ENCODE measurements at regions of chr5 and their contacts with region 1.

Region 1: DNA sequence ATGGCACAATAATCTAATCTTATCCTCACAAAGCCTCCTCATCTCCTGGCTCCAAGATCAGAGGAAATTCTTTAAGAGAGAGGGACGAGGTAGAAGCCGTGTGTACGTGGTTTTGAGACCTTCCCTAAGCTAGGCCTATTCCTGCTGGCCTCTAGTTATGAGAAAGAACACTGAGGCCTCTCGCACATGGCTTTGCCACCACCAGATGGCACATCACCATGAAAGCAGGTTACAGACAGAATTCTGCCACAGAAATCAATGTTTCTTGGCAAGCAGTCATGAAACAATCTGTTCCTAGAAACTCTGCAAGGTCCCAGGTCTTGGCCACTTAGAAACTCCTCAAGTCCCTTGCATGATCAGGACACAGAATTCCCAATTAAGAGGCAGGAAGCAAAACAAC is 268.2 kb upstream of the TAS2R1 start:
- DNase-seq: peak; percentile 66
- H3K4me3 Mint-ChIP-seq: no peak overlapping the region
- H3K27ac Mint-ChIP-seq: no peak overlapping the region
- H3K4me1 Mint-ChIP-seq: no peaks in the 10 kb centered on the region
- H3K27me3 Mint-ChIP-seq: no peaks in the 10 kb centered on the region
- CTCF ChIP-seq: peak; percentile 45

Region 2: DNA sequence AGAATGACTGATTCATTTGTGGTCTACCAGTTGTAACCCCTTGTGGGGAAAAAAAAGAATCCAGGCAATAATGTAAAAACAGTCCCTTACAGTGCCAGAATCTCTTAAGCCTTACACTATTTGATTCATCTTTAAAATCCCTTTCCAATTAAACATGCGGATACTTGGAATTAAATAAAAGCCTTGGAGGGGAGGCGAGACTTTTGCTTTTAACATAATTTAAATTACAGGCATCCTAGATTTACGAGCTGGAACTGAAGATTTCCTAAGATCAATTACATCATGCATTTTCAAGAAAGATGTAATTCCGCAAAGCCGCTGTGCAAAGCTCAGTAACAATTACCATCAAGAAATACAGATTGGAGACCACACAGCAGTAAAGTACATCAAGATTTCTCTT is 1659.1 kb before region 1 on chr5:
- CTCF ChIA-PET with region 1: no interaction called
- POLR2A ChIA-PET with region 1: no interaction called
- intact Hi-C with region 1: no loop called
- DNase-seq: no peak
- H3K4me3 Mint-ChIP-seq: no peak overlapping the region
- H3K27ac Mint-ChIP-seq: no peak overlapping the region
- H3K4me1 Mint-ChIP-seq: no peaks in the 10 kb centered on the region
- H3K27me3 Mint-ChIP-seq: peaks cover 14% of the 10 kb centered on the region
- CTCF ChIP-seq: no peak

Region 3: DNA sequence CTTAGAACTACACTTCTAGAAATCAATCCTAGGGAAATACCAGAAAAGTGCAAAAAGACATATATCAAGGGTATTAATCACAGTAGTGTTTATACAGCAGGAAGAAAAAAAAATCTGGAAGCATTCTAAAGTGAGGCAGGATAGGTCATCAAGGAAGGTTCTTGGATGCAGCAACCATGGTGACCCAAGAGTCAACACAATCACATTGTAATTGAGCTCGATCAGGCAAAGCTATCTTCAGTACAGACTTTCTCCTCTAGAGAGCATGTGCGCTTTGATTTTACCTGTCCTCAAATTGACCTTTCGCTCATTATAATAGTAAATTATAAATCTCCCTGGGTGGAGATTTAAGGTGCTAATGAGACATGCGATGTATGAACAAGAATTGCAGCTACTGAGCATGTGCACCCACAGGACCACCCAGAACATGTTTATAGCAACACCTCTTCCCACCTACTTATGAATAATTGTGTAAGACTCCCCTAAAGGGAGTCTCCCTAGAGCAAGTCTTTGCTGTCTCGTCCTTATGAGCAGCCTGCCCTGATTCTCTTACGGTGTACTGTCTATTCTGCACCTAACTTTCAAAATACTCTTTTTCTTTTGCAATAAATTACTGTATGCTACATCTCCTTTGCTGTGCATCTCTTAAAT is 53.7 kb after region 1 on chr5:
- CTCF ChIA-PET with region 1: interaction called, 3 read pairs
- POLR2A ChIA-PET with region 1: no interaction called
- intact Hi-C with region 1: loop called (anchors 10 kb)
- DNase-seq: no peak
- H3K4me3 Mint-ChIP-seq: no peak overlapping the region
- H3K27ac Mint-ChIP-seq: no peak overlapping the region
- H3K4me1 Mint-ChIP-seq: peaks cover 5% of the 10 kb centered on the region
- H3K27me3 Mint-ChIP-seq: no peaks in the 10 kb centered on the region
- CTCF ChIP-seq: no peak

Region 4: GRCh38 chr5:10030210-10030831 is 132.0 kb after region 1 on chr5:
- CTCF ChIA-PET with region 1: interaction called, 6 read pairs
- POLR2A ChIA-PET with region 1: no interaction called
- intact Hi-C with region 1: loop called (anchors 1 kb)
- DNase-seq: peak; percentile 71
- H3K4me3 Mint-ChIP-seq: no peak overlapping the region
- H3K27ac Mint-ChIP-seq: no peak overlapping the region
- H3K4me1 Mint-ChIP-seq: no peaks in the 10 kb centered on the region
- H3K27me3 Mint-ChIP-seq: no peaks in the 10 kb centered on the region
- CTCF ChIP-seq: peak; percentile 35

Region 5: GRCh38 chr5:10111571-10111970 is 213.3 kb after region 1 on chr5:
- CTCF ChIA-PET with region 1: interaction called, 11 read pairs
- POLR2A ChIA-PET with region 1: interaction called, 4 read pairs
- intact Hi-C with region 1: loop called (anchors 1 kb)
- DNase-seq: peak; percentile 78
- H3K4me3 Mint-ChIP-seq: no peak overlapping the region
- H3K27ac Mint-ChIP-seq: no peak overlapping the region
- H3K4me1 Mint-ChIP-seq: peaks cover 6% of the 10 kb centered on the region
- H3K27me3 Mint-ChIP-seq: no peaks in the 10 kb centered on the region
- CTCF ChIP-seq: peak; percentile 56

Region 6: DNA sequence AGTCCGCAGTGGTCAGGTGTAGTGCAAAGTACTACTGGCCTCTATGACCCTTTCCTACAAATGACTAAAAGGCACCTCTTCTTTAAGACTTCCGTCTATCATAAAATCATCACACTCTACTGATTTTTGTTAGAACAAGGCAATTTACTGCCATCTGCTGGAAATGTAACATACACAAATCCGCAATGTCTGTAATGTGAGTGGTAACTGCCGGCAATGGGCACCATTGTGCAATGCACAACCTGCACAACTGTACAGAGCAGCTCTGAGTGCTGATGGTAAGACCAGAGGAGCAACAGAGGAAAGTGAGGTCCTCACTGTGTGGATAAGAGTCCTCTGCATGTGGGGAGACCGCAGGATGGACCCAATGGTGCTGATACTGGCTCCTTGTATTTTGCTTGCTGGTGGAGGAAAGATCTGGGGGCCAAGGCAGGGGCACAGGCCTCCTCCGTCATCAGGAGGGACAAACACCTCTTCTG is 247.6 kb after region 1 on chr5:
- CTCF ChIA-PET with region 1: interaction called, 32 read pairs
- POLR2A ChIA-PET with region 1: no interaction called
- intact Hi-C with region 1: loop called (anchors 1 kb)
- DNase-seq: peak; percentile 70
- H3K4me3 Mint-ChIP-seq: no peak overlapping the region
- H3K27ac Mint-ChIP-seq: no peak overlapping the region
- H3K4me1 Mint-ChIP-seq: no peaks in the 10 kb centered on the region
- H3K27me3 Mint-ChIP-seq: no peaks in the 10 kb centered on the region
- CTCF ChIP-seq: peak; percentile 40